PC-9 (cell line): ENCODE measurements at regions of chr6 and their contacts with region 1.

Region 1: GRCh38 chr6:122399384-122400158 is at the start of gene HSF2:
- DNase-seq: peak; percentile 94 to 97
- H3K4me3 ChIP-seq: peak within 1 kb of the TSS; percentile 93
- H3K27ac ChIP-seq: peak within 1 kb of the TSS; percentile 81
- H3K4me1 ChIP-seq: peaks cover 29% of the 10 kb centered on the region
- H3K27me3 ChIP-seq: no peaks in the 10 kb centered on the region
- CTCF ChIP-seq: no peak; the same call in 1 of the 2 replicates
- total RNA-seq, gene HSF2: 12.4 and 15.5 TPM in 2 replicates

Region 2: GRCh38 chr6:121187200-121188145 is 1212.1 kb before region 1 on chr6:
- CTCF ChIA-PET with region 1: no interaction called
- POLR2A ChIA-PET with region 1: interaction called, 10 read pairs
- intact Hi-C with region 1: no loop called
- DNase-seq: peak in 1 of 2 experiments; percentile 97
- H3K4me3 ChIP-seq: no peak overlapping the region
- H3K27ac ChIP-seq: peak overlapping the region; percentile 58
- H3K4me1 ChIP-seq: peaks cover 33% of the 10 kb centered on the region
- H3K27me3 ChIP-seq: no peaks in the 10 kb centered on the region
- CTCF ChIP-seq: no peak

Region 3: GRCh38 chr6:122471107-122472021 is 71.8 kb after region 1 on chr6 and contains the start of gene SERINC1:
- CTCF ChIA-PET with region 1: no interaction called
- POLR2A ChIA-PET with region 1: interaction called, 3 read pairs
- intact Hi-C with region 1: loop called (anchors 1 kb)
- DNase-seq: peak; percentile 81 to 89
- H3K4me3 ChIP-seq: peak within 1 kb of the TSS; percentile 93
- H3K27ac ChIP-seq: peak within 1 kb of the TSS; percentile 79
- H3K4me1 ChIP-seq: peaks cover 18% of the 10 kb centered on the region
- H3K27me3 ChIP-seq: no peaks in the 10 kb centered on the region
- CTCF ChIP-seq: no peak
- total RNA-seq, gene SERINC1: 48.1 and 57.6 TPM in 2 replicates